Posterior cingulate gyrus (tissue), 11 donors: ENCODE measurements at regions of chr5 and their contacts with region 1.

Region 1: GRCh38 chr5:148374692-148375360 is 8.9 kb upstream of the FBXO38 start:
- DNase-seq: peak in 5 of 10 donors; percentile 6 to 58 (median 15)

Region 2: GRCh38 chr5:148179234-148179824 is 195.5 kb before region 1 on chr5:
- intact Hi-C with region 1: loop called (anchors 2 kb)
- DNase-seq: peak in 1 of 10 donors; percentile 7

Region 3: GRCh38 chr5:148290271-148291195 is 84.3 kb before region 1 on chr5:
- intact Hi-C with region 1: loop called (anchors 10 kb)
- DNase-seq: no peak